Colonic mucosa (tissue), 4 donors: ENCODE measurements at regions of chr10 and their contacts with region 1.

Region 1: DNA sequence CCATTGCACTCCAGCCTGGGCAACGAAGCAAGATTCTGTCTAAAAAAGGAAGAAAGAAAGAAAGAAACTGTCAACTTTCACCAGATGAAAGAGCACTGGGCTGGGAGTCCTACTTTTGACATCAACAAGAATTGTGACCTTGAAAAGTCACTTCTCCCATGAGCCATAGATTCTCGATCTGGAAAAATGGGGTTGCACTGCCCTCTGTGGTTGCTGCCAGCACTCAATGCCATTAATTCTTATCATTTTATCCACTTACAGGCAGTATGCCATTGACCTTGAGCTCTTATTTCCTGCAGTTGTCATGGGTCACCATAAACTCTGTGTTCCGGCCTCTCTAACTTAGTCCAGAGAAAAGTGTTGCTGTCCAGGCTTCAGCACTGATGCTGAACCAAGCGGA is 137.2 kb downstream of the NOC3L start:
- DNase-seq: no peak
- H3K4me3 ChIP-seq: no peak overlapping the region
- H3K27ac ChIP-seq: no peak overlapping the region
- H3K4me1 ChIP-seq: no peaks in the 10 kb centered on the region
- H3K27me3 ChIP-seq: no peaks in the 10 kb centered on the region
- CTCF ChIP-seq: no peak

Region 2: DNA sequence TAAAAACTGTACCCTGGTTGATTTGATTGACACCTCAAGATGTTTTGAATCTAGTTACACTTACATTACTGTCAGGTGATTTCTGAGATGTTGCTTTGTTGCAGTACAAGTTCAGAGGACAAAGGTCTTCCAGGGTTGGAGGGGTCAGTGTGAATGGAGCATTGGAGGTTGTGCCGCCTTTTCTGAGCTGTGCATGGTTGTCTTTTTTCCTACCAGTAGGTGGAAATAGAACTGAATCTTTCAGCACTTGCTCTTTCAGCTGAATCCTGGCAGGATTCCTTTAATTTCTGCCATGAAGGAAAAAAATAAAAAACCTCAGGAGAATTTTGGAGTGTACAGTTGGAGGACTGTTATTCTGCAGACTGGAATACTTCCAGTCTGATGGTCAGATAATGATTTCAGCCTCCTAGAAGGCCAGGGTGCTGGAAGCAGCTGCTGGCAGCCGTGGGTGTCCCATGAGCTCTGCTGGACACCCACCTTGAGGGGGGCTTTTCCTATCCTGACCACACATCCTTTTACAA is 149.2 kb before region 1 on chr10:
- intact Hi-C with region 1: loop called (anchors 10 kb)
- DNase-seq: peak; percentile 46
- H3K4me3 ChIP-seq: no peak overlapping the region
- H3K27ac ChIP-seq: no peak overlapping the region
- H3K4me1 ChIP-seq: no peaks in the 10 kb centered on the region
- H3K27me3 ChIP-seq: no peaks in the 10 kb centered on the region
- CTCF ChIP-seq: no peak